HCT116 (cell line): ENCODE measurements at regions of chr2 and their contacts with region 1.

Region 1: GRCh38 chr2:219029829-219030165 is 11.5 kb downstream of the CFAP65 start:
- DNase-seq: no peak
- ATAC-seq: peak; percentile 97
- H3K4me3 ChIP-seq: no peak overlapping the region
- H3K27ac ChIP-seq: no peak overlapping the region
- H3K4me1 ChIP-seq: no peaks in the 10 kb centered on the region; a peak in 1 of 4 replicates
- H3K27me3 ChIP-seq: peaks cover 18% of the 10 kb centered on the region
- CTCF ChIP-seq: peak; percentile 92 to 97 (median 96)
- POLR2A ChIP-seq: no peak
- RAD21 ChIP-seq: peak; percentile 92

Region 2: GRCh38 chr2:219002395-219003266 is 27.2 kb before region 1 on chr2:
- CTCF ChIA-PET with region 1: interaction called, 15 read pairs
- POLR2A ChIA-PET with region 1: no interaction called
- RAD21 ChIA-PET with region 1: no interaction called
- intact Hi-C with region 1: no loop called
- DNase-seq: peak; percentile 60
- ATAC-seq: peak; percentile 83
- H3K4me3 ChIP-seq: peak overlapping the region; percentile 56 to 68
- H3K27ac ChIP-seq: peak overlapping the region; percentile 51
- H3K4me1 ChIP-seq: peaks cover 9 to 35% of the 10 kb centered on the region in 2 experiments; a peak in 3 of 4 replicates
- H3K27me3 ChIP-seq: no peaks in the 10 kb centered on the region
- CTCF ChIP-seq: peak in 2 of 3 experiments; percentile 67 to 71; a peak in 4 of 6 replicates
- POLR2A ChIP-seq: no peak
- RAD21 ChIP-seq: no peak

Region 3: DNA sequence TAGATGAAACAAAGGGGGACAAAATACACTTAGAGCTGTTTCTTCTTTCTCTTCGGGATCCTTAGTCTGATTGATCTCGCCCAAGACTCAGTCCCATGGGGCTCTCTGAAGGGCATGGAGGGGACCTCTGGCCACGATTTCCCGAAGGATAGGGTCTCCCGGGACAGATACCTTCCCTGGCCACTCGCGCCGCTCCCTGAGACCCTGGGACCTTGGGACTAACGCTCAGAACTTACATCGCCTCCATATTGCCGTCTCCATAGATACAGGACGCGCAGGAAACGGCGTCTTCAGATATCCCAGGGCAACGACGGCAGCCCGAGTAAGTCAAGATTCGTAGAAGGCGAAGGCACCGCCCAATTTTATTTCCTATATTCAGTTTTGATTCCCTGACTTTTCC is 11.5 kb after region 1 on chr2 and contains the start of gene CFAP65:
- CTCF ChIA-PET with region 1: interaction called, 21 read pairs
- POLR2A ChIA-PET with region 1: no interaction called
- RAD21 ChIA-PET with region 1: no interaction called
- intact Hi-C with region 1: no loop called
- DNase-seq: peak; percentile 34
- ATAC-seq: peak; percentile 79
- H3K4me3 ChIP-seq: peak within 1 kb of the TSS; percentile 43 to 47
- H3K27ac ChIP-seq: no peak within 1 kb of the TSS
- H3K4me1 ChIP-seq: no peaks in the 10 kb centered on the region
- H3K27me3 ChIP-seq: peaks cover 24% of the 10 kb centered on the region
- CTCF ChIP-seq: no peak
- POLR2A ChIP-seq: no peak
- RAD21 ChIP-seq: no peak
- total RNA-seq, gene CFAP65: 0.52 TPM

Region 4: GRCh38 chr2:219119422-219120043 is 89.7 kb after region 1 on chr2:
- CTCF ChIA-PET with region 1: interaction called, 27 read pairs
- POLR2A ChIA-PET with region 1: no interaction called
- RAD21 ChIA-PET with region 1: interaction called in 1 of 2 experiments, 7 read pairs
- intact Hi-C with region 1: loop called (anchors 2 kb)
- DNase-seq: peak; percentile 27
- ATAC-seq: peak; percentile 93
- H3K4me3 ChIP-seq: no peak overlapping the region
- H3K27ac ChIP-seq: no peak overlapping the region
- H3K4me1 ChIP-seq: peaks cover 7 to 8% of the 10 kb centered on the region in 2 experiments
- H3K27me3 ChIP-seq: no peaks in the 10 kb centered on the region; the same call in 1 of the 2 replicates
- CTCF ChIP-seq: peak; percentile 67 to 93 (median 90)
- POLR2A ChIP-seq: no peak
- RAD21 ChIP-seq: peak; percentile 91

Region 5: DNA sequence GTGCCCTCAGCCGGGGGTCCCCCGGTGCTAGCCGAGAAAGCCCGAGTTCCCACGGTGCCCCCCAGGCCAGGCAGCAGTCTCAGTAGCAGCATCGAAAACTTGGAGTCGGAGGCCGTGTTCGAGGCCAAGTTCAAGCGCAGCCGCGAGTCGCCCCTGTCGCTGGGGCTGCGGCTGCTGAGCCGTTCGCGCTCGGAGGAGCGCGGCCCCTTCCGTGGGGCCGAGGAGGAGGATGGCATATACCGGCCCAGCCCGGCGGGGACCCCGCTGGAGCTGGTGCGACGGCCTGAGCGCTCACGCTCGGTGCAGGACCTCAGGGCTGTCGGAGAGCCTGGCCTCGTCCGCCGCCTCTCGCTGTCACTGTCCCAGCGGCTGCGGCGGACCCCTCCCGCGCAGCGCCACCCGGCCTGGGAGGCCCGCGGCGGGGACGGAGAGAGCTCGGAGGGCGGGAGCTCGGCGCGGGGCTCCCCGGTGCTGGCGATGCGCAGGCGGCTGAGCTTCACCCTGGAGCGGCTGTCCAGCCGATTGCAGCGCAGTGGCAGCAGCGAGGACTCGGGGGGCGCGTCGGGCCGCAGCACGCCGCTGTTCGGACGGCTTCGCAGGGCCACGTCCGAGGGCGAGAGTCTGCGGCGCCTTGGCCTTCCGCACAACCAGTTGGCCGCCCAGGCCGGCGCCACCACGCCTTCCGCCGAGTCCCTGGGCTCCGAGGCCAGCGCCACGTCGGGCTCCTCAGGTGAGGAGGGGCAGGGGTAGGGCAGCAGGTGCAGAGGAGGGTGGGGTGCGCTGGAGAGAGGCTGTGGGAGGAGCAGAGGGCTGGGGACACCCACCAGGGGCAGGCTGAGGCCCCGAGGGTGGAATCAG is 454.8 kb after region 1 on chr2:
- CTCF ChIA-PET with region 1: no interaction called
- POLR2A ChIA-PET with region 1: no interaction called
- RAD21 ChIA-PET with region 1: no interaction called
- intact Hi-C with region 1: no loop called
- DNase-seq: no peak
- ATAC-seq: no peak
- H3K4me3 ChIP-seq: no peak overlapping the region
- H3K27ac ChIP-seq: no peak overlapping the region
- H3K4me1 ChIP-seq: no peaks in the 10 kb centered on the region
- H3K27me3 ChIP-seq: no peaks in the 10 kb centered on the region
- CTCF ChIP-seq: no peak
- POLR2A ChIP-seq: no peak
- RAD21 ChIP-seq: no peak